ENCODE measurements at regions of chr3 and their contacts with region 1.

Region 1: DNA sequence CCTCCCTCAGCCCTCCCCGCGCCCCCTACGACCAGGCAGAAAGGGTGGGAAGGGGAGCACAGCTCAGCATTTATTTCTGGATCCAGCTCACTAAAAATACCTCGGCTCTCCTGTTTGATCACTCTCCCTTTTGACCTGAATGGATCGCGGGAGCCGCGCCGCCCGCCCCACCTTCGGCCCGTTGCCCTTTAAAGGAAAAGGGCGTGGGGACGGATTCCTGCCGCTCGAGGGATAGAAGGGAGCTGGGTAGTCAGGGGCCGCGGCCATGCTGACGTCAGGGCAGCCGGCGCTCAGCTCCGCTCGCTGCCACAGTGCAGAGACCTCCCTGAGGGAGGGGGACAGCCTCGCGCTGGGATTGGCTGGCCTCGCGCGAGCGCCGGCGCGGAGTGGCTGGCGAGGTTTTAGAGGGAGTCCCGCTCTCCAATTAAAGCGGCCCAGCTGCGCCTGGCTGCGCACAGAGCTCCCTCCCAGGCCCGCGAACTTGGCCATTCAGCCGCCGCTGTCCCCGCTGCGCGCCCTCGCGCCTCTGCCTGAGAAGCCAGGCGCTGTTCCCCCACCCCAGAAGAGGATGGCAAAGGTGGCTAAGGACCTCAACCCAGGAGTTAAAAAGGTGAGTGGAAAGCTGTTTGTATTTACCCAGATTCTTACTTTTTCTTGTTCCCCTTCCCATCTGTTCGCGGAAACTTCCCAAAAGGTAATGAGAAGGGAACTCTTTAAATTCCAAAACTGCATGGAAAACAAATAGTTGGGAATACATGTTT is at the start of gene LMCD1:
- DNase-seq: peak; percentile 96
- H3K4me3 ChIP-seq: peak within 1 kb of the TSS; percentile 56 to 63 (median 62)
- H3K27ac ChIP-seq: peak within 1 kb of the TSS; percentile 85 to 88 (median 88)
- H3K4me1 ChIP-seq: peaks cover 35 to 66% (median 44%) of the 10 kb centered on the region in 4 donors
- H3K27me3 ChIP-seq: no peaks in the 10 kb centered on the region
- CTCF ChIP-seq: peak; percentile 41 to 54 (median 51)
- EP300 ChIP-seq: no peak
- POLR2A ChIP-seq: peak; percentile 41
- total RNA-seq, gene LMCD1: 43.2 to 576 (median 131) TPM

Region 2: GRCh38 chr3:8111069-8111798 is 390.3 kb before region 1 on chr3:
- intact Hi-C with region 1: no loop called
- DNase-seq: no peak
- H3K4me3 ChIP-seq: peak overlapping the region in 3 of 4 donors; percentile 5 to 38 (median 13)
- H3K27ac ChIP-seq: no peak overlapping the region
- H3K4me1 ChIP-seq: peaks cover 0 to 12% (median 9%) of the 10 kb centered on the region in 4 donors
- H3K27me3 ChIP-seq: no peaks in the 10 kb centered on the region
- CTCF ChIP-seq: peak; percentile 72 to 86 (median 77)
- EP300 ChIP-seq: no peak
- POLR2A ChIP-seq: no peak

Region 3: DNA sequence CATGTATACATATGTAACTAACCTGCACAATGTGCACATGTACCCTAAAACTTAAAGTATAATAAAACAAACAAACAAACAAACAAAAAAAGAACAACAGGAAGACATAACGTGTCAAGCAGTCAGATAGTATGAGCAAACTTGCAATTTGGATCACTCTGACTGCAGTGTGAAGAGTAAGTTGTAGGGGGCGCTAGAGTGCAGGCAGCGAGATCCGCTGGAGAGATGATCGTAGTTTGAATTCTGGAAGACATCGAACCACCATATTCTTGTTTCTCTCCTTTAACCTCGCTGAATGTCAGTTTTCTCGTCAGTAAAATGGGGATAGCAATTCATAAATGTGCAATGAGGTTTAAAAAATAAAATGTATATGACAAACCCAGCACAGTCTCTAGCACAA is 165.1 kb before region 1 on chr3:
- intact Hi-C with region 1: no loop called
- DNase-seq: no peak
- H3K4me3 ChIP-seq: no peak overlapping the region
- H3K27ac ChIP-seq: no peak overlapping the region
- H3K4me1 ChIP-seq: no peaks in the 10 kb centered on the region
- H3K27me3 ChIP-seq: no peaks in the 10 kb centered on the region
- CTCF ChIP-seq: no peak
- EP300 ChIP-seq: no peak
- POLR2A ChIP-seq: no peak

Region 4: GRCh38 chr3:8441969-8442559 is 59.5 kb before region 1 on chr3:
- intact Hi-C with region 1: loop called (anchors 5 kb)
- DNase-seq: no peak
- H3K4me3 ChIP-seq: no peak overlapping the region
- H3K27ac ChIP-seq: peak overlapping the region in 3 of 4 donors; percentile 8 to 80 (median 72)
- H3K4me1 ChIP-seq: peaks cover 33 to 46% (median 38%) of the 10 kb centered on the region in 4 donors
- H3K27me3 ChIP-seq: no peaks in the 10 kb centered on the region
- CTCF ChIP-seq: peak; percentile 72 to 86 (median 82)
- EP300 ChIP-seq: no peak
- POLR2A ChIP-seq: no peak

Region 5: DNA sequence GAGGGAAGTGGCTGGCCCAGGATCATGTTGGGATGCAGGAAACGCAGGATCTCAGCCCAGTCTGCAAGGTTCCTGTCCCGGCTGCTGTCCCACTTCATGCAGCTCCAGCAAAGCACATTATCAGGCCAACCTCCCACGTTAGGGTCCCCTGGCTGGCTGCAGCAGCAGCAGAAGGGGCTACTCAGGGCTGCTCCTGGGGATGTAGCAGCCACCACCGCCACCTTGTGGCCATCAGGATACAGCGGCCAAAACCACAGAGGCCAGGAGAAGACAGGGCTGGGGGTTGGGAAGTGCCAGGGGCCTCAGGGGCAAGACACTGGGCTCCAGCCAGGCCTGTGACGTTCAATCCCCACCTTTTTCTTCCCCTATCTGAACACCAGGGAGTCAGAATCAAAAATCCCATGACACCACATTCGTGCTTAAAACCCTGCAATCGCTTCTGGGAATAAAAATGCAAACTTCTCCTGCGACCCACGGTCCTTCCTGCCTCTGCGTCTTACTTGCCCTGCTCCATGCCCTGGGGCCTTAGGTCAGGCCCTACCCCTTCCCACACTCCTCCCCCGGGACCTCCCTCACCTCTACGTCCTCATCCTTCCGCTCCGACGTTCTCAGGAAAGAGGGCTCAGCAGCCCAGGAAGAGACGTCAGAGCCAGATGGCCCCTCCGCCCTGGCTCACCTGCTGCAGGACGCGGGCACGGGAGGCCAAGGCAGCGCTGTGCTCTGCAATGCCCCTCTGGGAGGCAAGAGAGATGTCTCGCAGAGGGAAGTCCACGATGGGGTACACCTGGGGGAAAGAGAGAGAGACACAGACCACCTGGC is 121.5 kb after region 1 on chr3:
- intact Hi-C with region 1: loop called (anchors 5 kb)
- DNase-seq: no peak
- H3K4me3 ChIP-seq: peak overlapping the region in 1 of 4 donors; percentile 2
- H3K27ac ChIP-seq: no peak overlapping the region
- H3K4me1 ChIP-seq: peaks cover 9 to 11% (median 10%) of the 10 kb centered on the region in 4 donors
- H3K27me3 ChIP-seq: peaks cover 0 to 6% (median 0%) of the 10 kb centered on the region in 4 donors
- CTCF ChIP-seq: peak; percentile 78 to 89 (median 86)
- EP300 ChIP-seq: no peak
- POLR2A ChIP-seq: no peak